Transverse colon (tissue), 4 donors: ENCODE measurements at regions of chr1 and their contacts with region 1.

Region 1: GRCh38 chr1:168623003-168623828 is 46.8 kb downstream of the XCL1 start:
- DNase-seq: no peak
- H3K4me3 ChIP-seq: no peak overlapping the region
- H3K27ac ChIP-seq: no peak overlapping the region
- H3K4me1 ChIP-seq: no peaks in the 10 kb centered on the region
- H3K27me3 ChIP-seq: no peaks in the 10 kb centered on the region
- CTCF ChIP-seq: no peak
- EP300 ChIP-seq: no peak
- POLR2A ChIP-seq: no peak

Region 2: DNA sequence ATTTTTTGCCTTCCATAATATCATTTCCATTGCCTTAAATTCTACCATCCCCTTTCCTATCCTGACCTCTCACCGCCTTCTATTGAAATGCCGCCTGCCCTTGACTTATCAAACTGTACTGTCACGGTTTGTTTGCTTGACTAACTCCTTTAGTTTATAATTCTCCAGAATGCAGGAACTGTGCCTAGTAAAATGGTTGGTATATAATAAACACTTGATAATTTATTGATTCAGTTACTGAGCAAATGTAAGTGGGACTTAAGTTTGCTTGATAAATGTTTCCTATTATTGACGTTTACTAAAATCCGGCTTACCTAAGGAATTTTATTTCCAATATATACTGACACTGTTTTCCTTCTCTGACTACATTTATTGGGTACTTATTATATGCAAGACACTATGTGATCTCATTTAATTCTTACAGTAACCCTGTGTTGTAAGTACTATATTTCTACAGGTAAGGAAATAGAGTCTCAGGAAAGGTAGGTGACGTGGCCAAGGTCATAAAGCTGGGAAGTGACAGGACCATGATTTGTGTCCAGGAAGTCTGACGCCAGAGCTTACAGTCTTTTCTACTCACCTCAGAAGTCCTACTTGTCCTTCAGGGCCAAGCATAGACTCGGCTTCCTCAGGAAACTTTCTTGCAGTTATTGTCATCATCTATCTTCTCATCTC is 70.1 kb after region 1 on chr1:
- in situ Hi-C with region 1: no loop called
- intact Hi-C with region 1: loop called (anchors 2 kb)
- DNase-seq: peak; percentile 70
- H3K4me3 ChIP-seq: no peak overlapping the region
- H3K27ac ChIP-seq: peak overlapping the region; percentile 51 to 78 (median 70)
- H3K4me1 ChIP-seq: peaks cover 9 to 46% (median 34%) of the 10 kb centered on the region in 4 donors
- H3K27me3 ChIP-seq: no peaks in the 10 kb centered on the region
- CTCF ChIP-seq: no peak
- EP300 ChIP-seq: no peak
- POLR2A ChIP-seq: no peak